Endothelial cell of umbilical vein (primary cell): ENCODE measurements at regions of chr6 and their contacts with region 1.

Region 1: DNA sequence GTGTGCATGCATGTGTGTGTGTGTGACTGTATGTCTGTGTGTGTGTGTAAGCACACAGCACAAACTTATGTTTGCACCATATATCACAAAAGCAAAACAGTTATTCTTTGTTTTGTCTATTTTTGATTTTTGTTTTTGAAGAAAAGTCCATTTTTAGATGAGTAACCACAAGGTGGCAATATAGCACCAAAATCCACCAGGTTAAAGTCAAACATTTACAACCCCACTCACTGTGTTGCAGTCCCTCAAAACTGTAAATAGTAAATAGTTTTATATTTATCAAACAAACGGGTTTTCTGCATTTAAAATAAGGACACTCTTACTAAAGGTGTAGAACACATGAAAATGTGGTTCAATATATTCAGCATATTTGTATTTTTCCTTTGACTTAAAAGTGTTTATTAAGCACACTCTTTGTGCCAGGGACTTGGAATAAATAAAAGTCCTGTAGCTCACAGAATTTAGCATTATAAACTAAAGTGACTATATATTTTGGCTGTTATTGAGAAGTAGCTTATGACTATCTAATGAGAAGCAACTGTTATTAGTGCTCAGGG is 118.5 kb downstream of the GFRAL start:
- DNase-seq: peak; percentile 60
- H3K4me3 ChIP-seq: no peak overlapping the region
- H3K27ac ChIP-seq: no peak overlapping the region
- H3K4me1 ChIP-seq: no peaks in the 10 kb centered on the region
- H3K27me3 ChIP-seq: peaks cover 0 to 3% of the 10 kb centered on the region in 2 experiments
- CTCF ChIP-seq: peak; percentile 23 to 27
- POLR2A ChIP-seq: no peak

Region 2: GRCh38 chr6:55617272-55617671 is 171.5 kb after region 1 on chr6:
- CTCF ChIA-PET with region 1: interaction called, 5 read pairs
- POLR2A ChIA-PET with region 1: no interaction called
- dilution Hi-C with region 1: no loop called
- intact Hi-C with region 1: loop called (anchors 5 kb)
- DNase-seq: peak; percentile 60
- H3K4me3 ChIP-seq: no peak overlapping the region
- H3K27ac ChIP-seq: no peak overlapping the region
- H3K4me1 ChIP-seq: no peaks in the 10 kb centered on the region
- H3K27me3 ChIP-seq: no peaks in the 10 kb centered on the region
- CTCF ChIP-seq: peak; percentile 54 to 59
- POLR2A ChIP-seq: no peak

Region 3: GRCh38 chr6:55886185-55886836 is 440.6 kb after region 1 on chr6:
- CTCF ChIA-PET with region 1: interaction called, 68 read pairs
- POLR2A ChIA-PET with region 1: no interaction called
- dilution Hi-C with region 1: no loop called
- intact Hi-C with region 1: loop called (anchors 1 kb)
- DNase-seq: peak; percentile 30
- H3K4me3 ChIP-seq: no peak overlapping the region
- H3K27ac ChIP-seq: no peak overlapping the region
- H3K4me1 ChIP-seq: peaks cover 18% of the 10 kb centered on the region
- H3K27me3 ChIP-seq: no peaks in the 10 kb centered on the region
- CTCF ChIP-seq: peak in 1 of 2 donors; percentile 13
- POLR2A ChIP-seq: no peak

Region 4: GRCh38 chr6:55941702-55942101 is 496.0 kb after region 1 on chr6:
- CTCF ChIA-PET with region 1: interaction called, 68 read pairs
- POLR2A ChIA-PET with region 1: no interaction called
- dilution Hi-C with region 1: no loop called
- intact Hi-C with region 1: no loop called
- DNase-seq: peak; percentile 11
- H3K4me3 ChIP-seq: no peak overlapping the region
- H3K27ac ChIP-seq: no peak overlapping the region
- H3K4me1 ChIP-seq: no peaks in the 10 kb centered on the region
- H3K27me3 ChIP-seq: no peaks in the 10 kb centered on the region
- CTCF ChIP-seq: no peak
- POLR2A ChIP-seq: no peak

Region 5: GRCh38 chr6:55953335-55953734 is 507.6 kb after region 1 on chr6:
- CTCF ChIA-PET with region 1: interaction called, 76 read pairs
- POLR2A ChIA-PET with region 1: no interaction called
- dilution Hi-C with region 1: no loop called
- intact Hi-C with region 1: loop called (anchors 2 kb)
- DNase-seq: peak; percentile 51
- H3K4me3 ChIP-seq: no peak overlapping the region
- H3K27ac ChIP-seq: no peak overlapping the region
- H3K4me1 ChIP-seq: no peaks in the 10 kb centered on the region
- H3K27me3 ChIP-seq: no peaks in the 10 kb centered on the region
- CTCF ChIP-seq: no peak
- POLR2A ChIP-seq: no peak

Region 6: DNA sequence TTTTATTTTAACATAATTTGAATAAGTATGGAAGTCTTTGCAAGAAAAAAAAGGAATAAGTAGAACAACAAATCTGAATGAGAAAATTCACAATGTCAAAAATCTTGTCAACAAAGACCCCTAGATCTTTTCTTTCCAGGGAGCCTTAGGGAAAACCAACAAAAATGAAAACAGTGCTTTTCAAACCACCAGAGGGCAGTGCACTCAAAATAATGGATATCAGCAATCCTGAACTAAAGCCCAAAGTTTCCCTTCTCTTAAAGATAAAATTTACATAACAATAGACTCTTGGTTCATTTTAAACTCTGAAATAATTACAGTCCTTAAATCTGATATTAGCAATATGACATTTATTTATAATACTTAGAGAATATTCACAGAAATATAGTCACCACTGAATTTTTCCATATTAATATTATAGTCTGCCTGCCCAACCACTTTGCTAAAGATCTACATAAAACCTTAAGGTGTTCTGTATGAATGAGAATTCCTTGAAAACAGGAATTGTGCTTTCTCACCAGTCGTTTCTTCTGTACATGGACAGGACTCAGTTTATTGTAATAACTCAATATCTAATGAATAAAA is 535.0 kb after region 1 on chr6:
- CTCF ChIA-PET with region 1: interaction called, 20 read pairs
- POLR2A ChIA-PET with region 1: no interaction called
- dilution Hi-C with region 1: no loop called
- intact Hi-C with region 1: no loop called
- DNase-seq: peak; percentile 66
- H3K4me3 ChIP-seq: no peak overlapping the region
- H3K27ac ChIP-seq: no peak overlapping the region
- H3K4me1 ChIP-seq: no peaks in the 10 kb centered on the region
- H3K27me3 ChIP-seq: no peaks in the 10 kb centered on the region
- CTCF ChIP-seq: peak; percentile 39
- POLR2A ChIP-seq: no peak